ENCODE measurements at regions of chr2 and their contacts with region 1.

Region 1: DNA sequence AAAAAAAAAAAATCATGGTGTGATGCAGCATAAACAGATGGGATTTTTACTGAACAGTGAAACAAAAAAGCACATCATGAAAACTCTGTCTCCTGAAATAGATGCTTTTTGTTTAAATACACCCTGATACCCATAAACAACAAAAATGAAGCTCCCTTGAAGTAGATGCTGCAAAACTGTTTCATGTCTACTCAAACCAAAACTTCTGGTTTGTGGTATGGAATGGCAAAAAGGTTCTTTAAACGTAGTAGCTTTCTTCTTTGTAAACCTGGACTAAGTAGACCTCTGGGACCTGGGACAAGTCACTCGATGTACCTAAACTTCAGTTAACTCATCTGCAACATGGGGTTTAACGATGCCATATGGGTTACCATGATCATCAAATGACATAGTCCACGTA is 64.4 kb upstream of the RAPH1 start:
- DNase-seq: peak; percentile 66
- H3K4me3 Mint-ChIP-seq: no peak overlapping the region
- H3K27ac Mint-ChIP-seq: peak overlapping the region; percentile 21
- H3K4me1 Mint-ChIP-seq: peaks cover 30% of the 10 kb centered on the region
- H3K27me3 Mint-ChIP-seq: peaks cover 54% of the 10 kb centered on the region

Region 2: DNA sequence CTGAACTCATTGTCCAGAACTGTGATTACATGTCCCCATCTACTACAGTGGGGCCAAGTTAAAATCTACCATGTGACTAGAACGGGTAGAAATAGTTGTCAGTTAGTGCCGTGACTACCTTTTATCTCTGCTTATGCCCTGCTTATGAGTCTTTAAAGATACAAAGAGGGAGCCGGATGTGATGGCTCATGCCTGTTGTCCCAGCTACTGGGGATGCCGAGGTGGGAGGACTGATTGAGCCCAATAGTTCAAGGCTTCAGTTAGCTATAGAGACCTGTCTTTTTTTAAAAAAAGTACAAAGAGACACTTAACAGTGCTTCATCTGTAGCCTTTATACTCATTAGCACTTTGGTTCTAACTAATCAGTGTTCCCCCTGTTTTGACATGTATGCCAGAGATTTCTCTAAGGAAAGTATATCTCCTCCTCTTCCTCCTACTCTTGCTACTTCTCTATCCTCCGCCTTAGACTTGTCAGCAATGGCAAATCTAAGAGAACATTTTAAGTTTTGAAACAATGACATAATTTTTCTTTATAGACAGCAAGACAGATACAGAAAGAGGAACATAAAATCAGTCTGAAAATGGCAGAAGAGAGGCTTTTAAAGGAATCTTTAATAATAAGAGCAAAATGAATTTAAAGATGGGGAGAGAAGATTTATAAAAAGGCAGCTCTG is 539.8 kb before region 1 on chr2:
- intact Hi-C with region 1: no loop called
- DNase-seq: no peak
- H3K4me3 Mint-ChIP-seq: no peak overlapping the region
- H3K27ac Mint-ChIP-seq: no peak overlapping the region
- H3K4me1 Mint-ChIP-seq: no peaks in the 10 kb centered on the region
- H3K27me3 Mint-ChIP-seq: no peaks in the 10 kb centered on the region

Region 3: GRCh38 chr2:203484266-203485112 is 115.0 kb before region 1 on chr2:
- intact Hi-C with region 1: loop called (anchors 5 kb)
- DNase-seq: peak; percentile 84
- H3K4me3 Mint-ChIP-seq: no peak overlapping the region
- H3K27ac Mint-ChIP-seq: peak overlapping the region; percentile 9
- H3K4me1 Mint-ChIP-seq: peaks cover 7% of the 10 kb centered on the region
- H3K27me3 Mint-ChIP-seq: no peaks in the 10 kb centered on the region

Region 4: GRCh38 chr2:203535078-203535783 is 64.3 kb before region 1 on chr2 and contains the start of gene RAPH1:
- intact Hi-C with region 1: loop called (anchors 5 kb)
- DNase-seq: peak; percentile 88
- H3K4me3 Mint-ChIP-seq: peak within 1 kb of the TSS; percentile 87
- H3K27ac Mint-ChIP-seq: peak within 1 kb of the TSS; percentile 91
- H3K4me1 Mint-ChIP-seq: peaks cover 28% of the 10 kb centered on the region
- H3K27me3 Mint-ChIP-seq: peaks cover 57% of the 10 kb centered on the region
- total RNA-seq, gene RAPH1: 6.0 and 6.1 TPM in 2 replicates

Region 5: DNA sequence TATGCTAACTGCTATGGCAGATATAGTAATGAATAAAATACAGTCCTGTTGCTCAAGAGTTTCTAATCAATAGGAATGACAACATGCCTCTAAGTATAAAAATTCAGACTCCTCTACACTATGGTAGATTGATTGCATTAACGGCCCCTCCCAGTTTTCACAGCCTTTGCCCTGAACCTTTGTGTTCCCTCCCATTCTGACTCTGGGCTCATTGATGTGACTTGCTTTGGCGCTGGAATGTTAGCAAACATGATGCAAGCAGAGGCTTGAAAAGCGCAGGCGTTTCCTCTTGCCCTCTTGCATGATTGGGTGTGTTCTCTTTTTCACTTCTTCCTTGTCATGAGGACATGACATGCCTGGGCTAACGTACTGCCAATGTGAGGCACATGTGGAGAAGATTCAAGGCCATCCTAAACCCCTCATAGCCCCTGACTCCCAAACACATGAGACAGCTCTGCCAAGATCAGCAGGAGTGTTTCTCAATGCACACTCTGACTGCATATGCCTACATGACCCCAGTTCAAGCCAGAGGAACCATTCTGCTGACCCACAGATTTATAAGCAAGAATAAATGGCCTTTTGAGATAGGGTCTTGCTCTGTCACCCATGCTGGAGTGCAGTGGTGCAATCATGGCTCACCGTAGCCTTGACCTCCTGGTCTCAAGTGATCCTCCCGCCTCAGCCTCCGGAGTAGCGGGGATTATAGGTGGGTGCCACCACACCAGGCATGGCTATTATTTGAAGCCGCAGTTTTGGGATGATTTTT is 57.2 kb after region 1 on chr2:
- intact Hi-C with region 1: loop called (anchors 5 kb)
- DNase-seq: peak; percentile 62
- H3K4me3 Mint-ChIP-seq: peak overlapping the region; percentile 12
- H3K27ac Mint-ChIP-seq: peak overlapping the region; percentile 71
- H3K4me1 Mint-ChIP-seq: peaks cover 37% of the 10 kb centered on the region
- H3K27me3 Mint-ChIP-seq: no peaks in the 10 kb centered on the region

Measured in activated CD4-positive, alpha-beta T cell treated with anti-CD3 and anti-CD28 coated beads, Interleukin-2, amount 10 ng/mL, durations not matched to agents 24 days and 14 days (primary cell).